Posterior cingulate gyrus (tissue), 11 donors: ENCODE measurements at regions of chr4 and their contacts with region 1.

Region 1: DNA sequence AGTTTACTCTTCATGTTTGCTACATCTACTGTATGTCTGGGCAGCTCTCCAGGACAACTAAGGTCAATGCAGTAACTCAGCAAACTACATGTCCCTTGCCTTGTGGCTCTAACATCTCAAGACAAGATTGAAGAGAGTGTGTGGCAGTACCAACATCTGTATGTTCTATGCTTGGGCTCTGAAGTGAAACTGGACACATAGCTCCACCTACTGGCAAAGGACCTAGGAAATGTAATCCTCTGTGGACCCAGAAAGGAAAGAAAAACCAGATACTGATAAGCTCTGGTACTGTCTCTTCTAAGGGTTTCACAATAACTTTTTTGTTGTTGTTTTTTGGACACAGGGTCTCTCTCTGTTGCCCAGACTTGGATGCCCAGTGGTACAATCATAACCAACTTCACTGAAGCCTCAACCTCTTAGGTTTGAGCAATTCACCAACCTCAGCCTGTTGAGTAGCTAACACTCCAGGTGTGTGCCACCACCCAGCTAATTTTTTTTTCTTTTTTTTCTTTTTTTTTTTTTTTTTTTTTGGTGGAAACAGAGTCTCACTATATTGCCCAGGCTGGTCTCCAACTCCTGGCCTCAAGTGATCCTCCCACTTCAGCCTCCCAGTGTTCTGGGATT is 64.1 kb downstream of the QDPR start:
- DNase-seq: peak in 3 of 10 donors; percentile 44 to 55 (median 48)

Region 2: DNA sequence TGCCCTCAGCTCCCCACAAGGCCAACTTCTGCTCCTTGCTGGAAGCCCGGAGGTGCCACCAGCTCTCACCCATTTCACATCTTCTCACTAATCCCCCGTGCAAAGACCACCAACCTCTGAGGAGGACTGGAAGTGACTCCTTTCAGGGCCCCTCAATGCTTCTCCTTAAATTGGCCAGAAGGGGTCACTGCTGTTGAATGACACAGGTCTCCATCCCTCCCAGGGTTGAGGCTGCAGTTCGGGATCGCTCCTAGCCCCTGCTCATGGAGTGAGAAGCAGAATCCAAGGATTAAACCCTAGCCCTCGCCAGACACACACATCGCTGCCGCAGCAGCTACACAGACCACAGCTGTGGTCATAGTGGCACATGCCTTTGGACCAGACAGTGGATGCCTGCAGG is 942.1 kb before region 1 on chr4:
- intact Hi-C with region 1: loop called (anchors 10 kb)
- DNase-seq: peak in 1 of 10 donors; percentile 47

Region 3: GRCh38 chr4:16916719-16917337 is 531.0 kb before region 1 on chr4:
- intact Hi-C with region 1: loop called (anchors 5 kb)
- DNase-seq: no peak

Region 4: GRCh38 chr4:17168571-17168970 is 279.2 kb before region 1 on chr4:
- intact Hi-C with region 1: no loop called
- DNase-seq: no peak

Region 5: DNA sequence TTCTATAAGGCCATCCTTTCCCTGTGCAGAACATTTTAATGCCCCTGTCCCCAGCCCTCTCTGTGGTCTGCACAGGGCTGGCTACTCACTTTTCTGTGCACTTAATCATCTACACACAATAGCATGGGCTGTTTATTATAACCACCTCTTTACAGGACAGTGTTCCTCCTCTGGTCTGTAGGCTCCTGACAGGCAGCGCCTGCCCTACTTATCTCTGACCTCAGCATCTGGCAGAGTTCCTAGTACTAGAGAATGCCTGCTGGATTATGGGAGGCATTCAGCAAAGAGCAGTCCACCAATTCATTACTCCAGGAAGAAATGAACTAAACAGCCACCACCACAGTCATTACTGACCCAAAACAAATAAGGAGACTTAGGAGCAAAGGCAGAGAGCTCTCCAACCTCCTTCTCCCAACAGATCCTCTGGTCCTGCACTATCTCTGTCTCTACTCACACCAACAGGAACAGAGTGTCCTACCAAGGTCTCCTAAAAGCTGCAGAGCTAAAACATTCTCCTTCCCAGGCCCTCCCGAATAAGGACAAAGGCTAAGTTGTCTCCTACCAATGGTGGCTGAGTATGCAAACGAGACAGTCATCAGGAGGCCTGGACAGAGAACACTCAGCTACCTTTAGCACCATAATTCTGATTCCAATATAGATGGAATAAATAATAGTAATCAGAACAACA is 215.1 kb before region 1 on chr4:
- intact Hi-C with region 1: no loop called
- DNase-seq: peak in 4 of 10 donors; percentile 10 to 74 (median 27)

Region 6: DNA sequence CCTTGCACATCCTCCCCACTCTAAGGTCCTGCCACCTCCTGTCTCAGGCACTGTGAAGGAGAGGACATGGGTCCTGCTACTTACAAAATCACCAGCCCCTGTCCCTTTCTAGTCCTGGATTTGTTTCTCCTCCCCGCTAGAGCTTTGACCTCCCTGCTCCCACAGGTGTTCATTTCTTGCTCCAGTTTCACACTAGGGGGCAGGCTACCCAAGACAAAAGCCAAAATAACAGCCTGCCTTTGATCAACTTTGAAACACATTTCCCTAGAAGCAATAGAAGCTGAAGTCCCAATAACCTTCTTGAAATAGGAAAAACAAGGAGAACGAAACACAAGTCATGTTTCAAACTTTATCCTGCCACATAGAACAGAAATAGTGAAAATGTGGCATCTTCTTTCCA is 100.3 kb before region 1 on chr4:
- intact Hi-C with region 1: loop called (anchors 2 kb)
- DNase-seq: peak in 1 of 10 donors; percentile 16